Mammary epithelial cell (primary cell): ENCODE measurements at regions of chr11 and their contacts with region 1.

Region 1: DNA sequence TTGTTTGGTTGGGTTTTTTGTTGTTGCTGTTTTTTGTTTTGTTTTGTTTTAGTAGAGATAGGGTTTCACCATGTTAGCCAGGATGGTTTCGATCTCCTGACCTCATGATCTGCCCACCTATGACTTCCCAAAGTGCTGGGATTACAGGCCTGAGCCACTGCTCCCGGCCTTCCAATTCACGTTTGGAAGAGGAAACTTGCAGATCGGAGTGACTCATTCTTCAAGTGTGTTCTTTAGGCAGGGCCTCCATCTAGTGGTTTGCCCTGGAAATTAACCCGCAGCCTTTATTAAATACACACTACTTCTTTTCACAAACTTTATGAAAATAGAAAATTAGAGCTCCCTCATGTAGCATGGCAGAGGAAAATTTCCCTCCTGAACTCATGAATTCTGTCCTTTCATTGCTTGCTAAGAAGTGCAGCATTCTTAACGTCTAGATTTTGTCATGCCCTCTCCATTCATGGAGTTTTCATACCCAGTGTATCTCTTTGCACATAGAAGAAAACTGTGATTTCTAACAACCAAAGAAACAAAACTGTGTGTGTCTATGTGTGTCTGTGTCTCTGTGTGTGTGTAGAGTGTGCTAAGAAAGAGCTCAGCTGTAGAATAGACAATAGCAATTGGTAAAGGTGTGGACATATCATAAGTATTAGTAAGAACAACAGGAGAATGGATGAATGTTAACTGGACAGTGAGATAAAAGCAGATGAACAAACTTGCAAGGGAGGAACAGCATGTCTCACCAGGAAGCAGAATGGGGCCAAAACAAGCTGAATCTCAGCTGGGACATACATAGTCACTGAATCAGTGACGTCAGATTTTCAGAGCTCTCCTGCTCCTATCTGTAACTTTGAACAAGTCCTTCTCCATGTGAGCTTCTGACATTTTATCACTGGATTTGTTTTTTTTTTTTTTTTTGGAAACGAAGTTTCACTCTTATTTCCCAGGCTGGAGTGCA is 118.4 kb downstream of the BBOX1 start:
- DNase-seq: peak; percentile 64
- H3K4me3 ChIP-seq: no peak overlapping the region
- H3K27ac ChIP-seq: peak overlapping the region; percentile 22
- H3K4me1 ChIP-seq: peaks cover 6% of the 10 kb centered on the region
- H3K27me3 ChIP-seq: no peaks in the 10 kb centered on the region
- CTCF ChIP-seq: peak; percentile 78 to 86

Region 2: GRCh38 chr11:26522912-26523610 is 635.9 kb before region 1 on chr11:
- CTCF ChIA-PET with region 1: interaction called, 10 read pairs
- dilution Hi-C with region 1: no loop called
- in situ Hi-C with region 1: no loop called
- intact Hi-C with region 1: loop called (anchors 2 kb)
- DNase-seq: peak; percentile 25
- H3K4me3 ChIP-seq: no peak overlapping the region
- H3K27ac ChIP-seq: no peak overlapping the region
- H3K4me1 ChIP-seq: no peaks in the 10 kb centered on the region
- H3K27me3 ChIP-seq: no peaks in the 10 kb centered on the region
- CTCF ChIP-seq: peak; percentile 37 to 65

Region 3: DNA sequence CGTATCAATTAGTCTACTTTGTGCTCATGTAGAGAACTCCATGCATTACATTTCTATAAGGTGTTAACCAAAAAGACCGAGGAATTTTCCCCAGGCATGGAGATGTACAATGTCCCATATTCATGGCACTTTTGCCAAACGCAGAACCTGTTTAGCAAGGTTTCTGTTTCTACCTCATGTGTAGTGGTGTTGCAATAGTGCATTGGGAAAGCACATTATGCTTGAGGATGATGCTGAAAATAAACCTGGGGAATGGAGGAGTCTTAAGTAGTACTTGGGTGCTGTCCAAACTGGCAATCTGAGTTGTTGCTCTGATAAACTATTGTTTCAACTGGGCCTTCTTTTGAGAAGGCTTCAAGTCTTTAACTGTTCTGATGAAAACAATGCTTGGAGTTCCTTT is 575.5 kb before region 1 on chr11:
- CTCF ChIA-PET with region 1: no interaction called
- dilution Hi-C with region 1: no loop called
- in situ Hi-C with region 1: no loop called
- intact Hi-C with region 1: no loop called
- DNase-seq: peak; percentile 91
- H3K4me3 ChIP-seq: peak overlapping the region in 1 of 3 experiments; percentile 5
- H3K27ac ChIP-seq: peak overlapping the region; percentile 52
- H3K4me1 ChIP-seq: peaks cover 21% of the 10 kb centered on the region
- H3K27me3 ChIP-seq: no peaks in the 10 kb centered on the region
- CTCF ChIP-seq: no peak

Region 4: GRCh38 chr11:26649884-26650283 is 509.1 kb before region 1 on chr11:
- CTCF ChIA-PET with region 1: no interaction called
- dilution Hi-C with region 1: no loop called
- in situ Hi-C with region 1: no loop called
- intact Hi-C with region 1: loop called (anchors 2 kb)
- DNase-seq: peak; percentile 58
- H3K4me3 ChIP-seq: no peak overlapping the region
- H3K27ac ChIP-seq: no peak overlapping the region
- H3K4me1 ChIP-seq: no peaks in the 10 kb centered on the region
- H3K27me3 ChIP-seq: peaks cover 5% of the 10 kb centered on the region
- CTCF ChIP-seq: peak; percentile 72 to 77

Region 5: GRCh38 chr11:27124514-27125264 is 34.3 kb before region 1 on chr11:
- CTCF ChIA-PET with region 1: interaction called, 6 read pairs
- dilution Hi-C with region 1: no loop called
- in situ Hi-C with region 1: no loop called
- intact Hi-C with region 1: loop called (anchors 1 kb)
- DNase-seq: peak; percentile 29
- H3K4me3 ChIP-seq: no peak overlapping the region
- H3K27ac ChIP-seq: no peak overlapping the region
- H3K4me1 ChIP-seq: no peaks in the 10 kb centered on the region
- H3K27me3 ChIP-seq: no peaks in the 10 kb centered on the region
- CTCF ChIP-seq: peak; percentile 17 to 47